Transverse colon (tissue), 4 donors: ENCODE measurements at regions of chrX and their contacts with region 1.

Region 1: DNA sequence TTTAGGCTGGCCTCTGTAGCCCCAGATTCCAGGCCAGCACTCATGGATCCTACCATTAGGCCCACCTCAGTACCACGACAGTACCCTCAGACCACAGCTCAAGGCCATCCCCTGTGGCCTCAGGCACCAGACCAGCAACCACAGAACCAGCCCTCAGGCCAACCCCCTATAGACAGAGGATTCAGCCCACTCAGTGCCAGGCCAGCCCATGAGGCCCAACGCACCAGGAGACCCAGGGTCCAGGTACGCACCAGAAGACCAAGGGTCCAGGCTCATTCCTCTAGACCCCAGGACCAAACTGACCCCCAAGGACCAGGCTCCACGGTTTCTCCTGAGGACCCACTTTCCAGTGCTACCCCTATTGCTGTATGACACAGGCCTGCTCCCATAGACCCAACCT is 39.5 kb upstream of the MAGEC2 start:
- DNase-seq: no peak
- H3K4me3 ChIP-seq: no peak overlapping the region
- H3K27ac ChIP-seq: no peak overlapping the region
- H3K4me1 ChIP-seq: no peaks in the 10 kb centered on the region
- H3K27me3 ChIP-seq: no peaks in the 10 kb centered on the region
- CTCF ChIP-seq: no peak
- EP300 ChIP-seq: no peak
- POLR2A ChIP-seq: no peak

Region 2: GRCh38 chrX:142001934-142002333 is 242.6 kb before region 1 on chrX:
- in situ Hi-C with region 1: no loop called
- intact Hi-C with region 1: no loop called
- DNase-seq: no peak
- H3K4me3 ChIP-seq: no peak overlapping the region
- H3K27ac ChIP-seq: no peak overlapping the region
- H3K4me1 ChIP-seq: no peaks in the 10 kb centered on the region
- H3K27me3 ChIP-seq: no peaks in the 10 kb centered on the region
- CTCF ChIP-seq: no peak
- EP300 ChIP-seq: no peak
- POLR2A ChIP-seq: no peak

Region 3: GRCh38 chrX:142201113-142201512 is 43.5 kb before region 1 on chrX:
- in situ Hi-C with region 1: no loop called
- intact Hi-C with region 1: loop called (anchors 1 kb)
- DNase-seq: no peak
- H3K4me3 ChIP-seq: no peak overlapping the region
- H3K27ac ChIP-seq: no peak overlapping the region
- H3K4me1 ChIP-seq: no peaks in the 10 kb centered on the region
- H3K27me3 ChIP-seq: no peaks in the 10 kb centered on the region
- CTCF ChIP-seq: no peak
- EP300 ChIP-seq: no peak
- POLR2A ChIP-seq: no peak

Region 4: GRCh38 chrX:142256935-142257334 is 12.4 kb after region 1 on chrX:
- in situ Hi-C with region 1: no loop called
- intact Hi-C with region 1: no loop called
- DNase-seq: no peak
- H3K4me3 ChIP-seq: no peak overlapping the region
- H3K27ac ChIP-seq: no peak overlapping the region
- H3K4me1 ChIP-seq: no peaks in the 10 kb centered on the region
- H3K27me3 ChIP-seq: no peaks in the 10 kb centered on the region
- CTCF ChIP-seq: no peak
- EP300 ChIP-seq: no peak
- POLR2A ChIP-seq: no peak

Region 5: GRCh38 chrX:142296421-142296820 is 51.9 kb after region 1 on chrX:
- in situ Hi-C with region 1: no loop called
- intact Hi-C with region 1: no loop called
- DNase-seq: no peak
- H3K4me3 ChIP-seq: no peak overlapping the region
- H3K27ac ChIP-seq: no peak overlapping the region
- H3K4me1 ChIP-seq: no peaks in the 10 kb centered on the region
- H3K27me3 ChIP-seq: no peaks in the 10 kb centered on the region
- CTCF ChIP-seq: no peak
- EP300 ChIP-seq: no peak
- POLR2A ChIP-seq: no peak

Region 6: DNA sequence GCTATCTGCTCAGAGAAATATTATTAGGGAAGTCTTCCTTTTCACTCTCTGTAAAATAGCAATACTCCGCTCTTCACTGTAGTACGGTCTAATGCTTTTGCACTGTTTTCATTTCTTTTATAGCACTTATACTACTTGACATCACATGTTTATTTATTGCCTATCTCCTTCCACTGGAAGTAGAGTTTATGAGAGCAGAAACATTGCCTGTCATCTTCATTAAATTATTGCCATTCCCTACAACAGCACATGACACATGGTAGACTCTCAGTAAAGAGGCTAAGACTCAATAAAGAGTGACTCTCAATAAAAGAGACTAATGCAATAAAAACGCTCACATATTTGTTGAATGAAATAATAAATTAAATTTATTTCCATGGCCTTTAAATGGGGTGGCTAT is 201.8 kb after region 1 on chrX:
- in situ Hi-C with region 1: no loop called
- intact Hi-C with region 1: no loop called
- DNase-seq: no peak
- H3K4me3 ChIP-seq: no peak overlapping the region
- H3K27ac ChIP-seq: no peak overlapping the region
- H3K4me1 ChIP-seq: no peaks in the 10 kb centered on the region
- H3K27me3 ChIP-seq: no peaks in the 10 kb centered on the region
- CTCF ChIP-seq: no peak
- EP300 ChIP-seq: no peak
- POLR2A ChIP-seq: no peak